ENCODE measurements at regions of chr3 and their contacts with region 1.

Region 1: GRCh38 chr3:49673715-49674496 is at the start of gene APEH:
- DNase-seq: peak; percentile 98 to 99 (median 98)
- H3K4me3 ChIP-seq: peak within 1 kb of the TSS; percentile 48 to 75
- H3K4me3 Mint-ChIP-seq: peak within 1 kb of the TSS; percentile 90 to 99 (median 94)
- H3K27ac ChIP-seq: peak within 1 kb of the TSS; percentile 77
- H3K27ac Mint-ChIP-seq: peak within 1 kb of the TSS; percentile 97 to 99 (median 98)
- H3K4me1 ChIP-seq: peaks cover 32% of the 10 kb centered on the region
- H3K4me1 Mint-ChIP-seq: peaks cover 20 to 50% (median 34%) of the 10 kb centered on the region in 4 donors
- H3K27me3 ChIP-seq: no peaks in the 10 kb centered on the region
- H3K27me3 Mint-ChIP-seq: no peaks in the 10 kb centered on the region
- total RNA-seq, gene APEH: 130 to 136 TPM

Region 2: DNA sequence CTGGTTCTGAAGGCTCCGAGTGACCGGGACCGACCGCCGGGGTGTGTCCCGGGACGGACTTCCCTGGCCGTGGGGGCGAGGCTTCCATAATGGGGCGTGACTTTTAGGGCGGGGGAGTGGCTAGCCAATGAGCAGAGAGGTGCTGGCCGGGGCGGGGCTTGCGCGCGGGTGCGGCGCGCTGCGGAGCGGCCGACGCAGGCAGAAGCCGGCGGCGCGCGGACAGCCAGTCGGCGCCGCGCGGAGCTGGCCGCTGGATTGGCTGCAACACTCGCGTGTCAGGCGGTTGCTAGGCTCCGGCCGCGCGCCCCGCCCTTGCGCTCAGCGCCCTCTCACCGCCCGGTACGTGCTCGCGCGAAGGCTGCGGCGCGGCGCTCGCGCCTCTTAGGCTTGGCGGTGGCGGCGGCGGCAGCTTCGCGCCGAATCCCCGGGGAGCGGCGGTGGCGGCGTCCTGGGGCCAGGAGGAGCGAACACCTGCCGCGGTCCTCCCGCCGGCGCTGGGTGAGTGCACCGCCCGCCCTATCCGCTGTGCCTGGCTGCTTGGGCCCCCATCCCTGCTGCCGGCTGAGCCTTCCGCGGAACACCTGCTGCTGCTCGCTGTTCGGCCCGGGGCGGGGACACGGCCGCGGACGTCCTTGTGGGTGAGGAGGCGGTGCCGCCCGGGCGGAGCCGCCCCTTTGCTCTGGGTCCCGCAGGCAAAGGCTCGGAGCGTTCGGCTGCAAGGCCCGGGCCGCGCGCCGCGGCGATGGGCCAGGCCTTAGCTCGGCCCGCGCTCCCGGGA is 203.8 kb before region 1 on chr3 and contains the start of gene DAG1:
- CTCF ChIA-PET with region 1: no interaction called
- POLR2A ChIA-PET with region 1: interaction called, 5 read pairs
- intact Hi-C with region 1: loop called (anchors 1 kb)
- DNase-seq: peak; percentile 93 to 96 (median 95)
- H3K4me3 ChIP-seq: peak within 1 kb of the TSS; percentile 71 to 89
- H3K4me3 Mint-ChIP-seq: peak within 1 kb of the TSS; percentile 89 to 93 (median 91)
- H3K27ac ChIP-seq: peak within 1 kb of the TSS; percentile 87
- H3K27ac Mint-ChIP-seq: peak within 1 kb of the TSS; percentile 90 to 96 (median 95)
- H3K4me1 ChIP-seq: peaks cover 26% of the 10 kb centered on the region
- H3K4me1 Mint-ChIP-seq: peaks cover 15 to 28% (median 19%) of the 10 kb centered on the region in 4 donors
- H3K27me3 ChIP-seq: no peaks in the 10 kb centered on the region
- H3K27me3 Mint-ChIP-seq: no peaks in the 10 kb centered on the region
- total RNA-seq, gene DAG1: 15.3 to 18.0 TPM

Region 3: GRCh38 chr3:49566312-49566711 is 107.6 kb before region 1 on chr3:
- CTCF ChIA-PET with region 1: interaction called, 12 read pairs
- POLR2A ChIA-PET with region 1: no interaction called
- intact Hi-C with region 1: loop called (anchors 1 kb)
- DNase-seq: no peak
- H3K4me3 ChIP-seq: no peak overlapping the region
- H3K4me3 Mint-ChIP-seq: no peak overlapping the region
- H3K27ac ChIP-seq: no peak overlapping the region
- H3K27ac Mint-ChIP-seq: no peak overlapping the region
- H3K4me1 ChIP-seq: no peaks in the 10 kb centered on the region
- H3K4me1 Mint-ChIP-seq: no peaks in the 10 kb centered on the region
- H3K27me3 ChIP-seq: no peaks in the 10 kb centered on the region
- H3K27me3 Mint-ChIP-seq: peaks cover 0 to 10% of the 10 kb centered on the region in 2 donors

Region 4: GRCh38 chr3:49602877-49603411 is 71.0 kb before region 1 on chr3:
- CTCF ChIA-PET with region 1: interaction called, 3 read pairs
- POLR2A ChIA-PET with region 1: no interaction called
- intact Hi-C with region 1: loop called (anchors 1 kb)
- DNase-seq: peak; percentile 43 to 78 (median 53)
- H3K4me3 ChIP-seq: no peak overlapping the region
- H3K4me3 Mint-ChIP-seq: peak overlapping the region in 5 of 8 donors; percentile 1 to 66 (median 54)
- H3K27ac ChIP-seq: peak overlapping the region; percentile 38
- H3K27ac Mint-ChIP-seq: peak overlapping the region; percentile 73 to 94 (median 90)
- H3K4me1 ChIP-seq: peaks cover 18% of the 10 kb centered on the region
- H3K4me1 Mint-ChIP-seq: peaks cover 14 to 27% (median 19%) of the 10 kb centered on the region in 4 donors
- H3K27me3 ChIP-seq: no peaks in the 10 kb centered on the region
- H3K27me3 Mint-ChIP-seq: no peaks in the 10 kb centered on the region

Region 5: GRCh38 chr3:49689046-49689907 is 15.4 kb after region 1 on chr3 and contains the starts of genes MST1 and RNF123:
- CTCF ChIA-PET with region 1: no interaction called
- POLR2A ChIA-PET with region 1: interaction called, 5 read pairs
- intact Hi-C with region 1: loop called (anchors 1 kb)
- DNase-seq: peak; percentile 90 to 95 (median 92)
- H3K4me3 ChIP-seq: peak within 1 kb of the TSS; percentile 91 to 98
- H3K4me3 Mint-ChIP-seq: peak within 1 kb of the TSS; percentile 90 to 99 (median 96)
- H3K27ac ChIP-seq: peak within 1 kb of the TSS; percentile 72
- H3K27ac Mint-ChIP-seq: peak within 1 kb of the TSS; percentile 93 to 98 (median 97)
- H3K4me1 ChIP-seq: peaks cover 27% of the 10 kb centered on the region
- H3K4me1 Mint-ChIP-seq: peaks cover 16 to 52% (median 35%) of the 10 kb centered on the region in 4 donors
- H3K27me3 ChIP-seq: no peaks in the 10 kb centered on the region
- H3K27me3 Mint-ChIP-seq: peaks cover 2 to 3% of the 10 kb centered on the region in 2 donors
- total RNA-seq, gene MST1: 6.3 to 10.2 TPM
- total RNA-seq, gene RNF123: 69.7 to 74.7 TPM

Region 6: GRCh38 chr3:49723628-49724551 is 50.0 kb after region 1 on chr3 and contains the start of gene GMPPB:
- CTCF ChIA-PET with region 1: no interaction called
- POLR2A ChIA-PET with region 1: interaction called, 3 read pairs
- intact Hi-C with region 1: loop called (anchors 1 kb)
- DNase-seq: peak; percentile 88 to 92 (median 92)
- H3K4me3 ChIP-seq: peak within 1 kb of the TSS; percentile 85 to 89
- H3K4me3 Mint-ChIP-seq: peak within 1 kb of the TSS; percentile 93 to 98 (median 96)
- H3K27ac ChIP-seq: peak within 1 kb of the TSS; percentile 99
- H3K27ac Mint-ChIP-seq: peak within 1 kb of the TSS; percentile 98 to 99 (median 99)
- H3K4me1 ChIP-seq: peaks cover 26% of the 10 kb centered on the region
- H3K4me1 Mint-ChIP-seq: peaks cover 13 to 48% (median 24%) of the 10 kb centered on the region in 4 donors
- H3K27me3 ChIP-seq: no peaks in the 10 kb centered on the region
- H3K27me3 Mint-ChIP-seq: peaks cover 0 to 2% of the 10 kb centered on the region in 2 donors
- total RNA-seq, gene GMPPB: 59.5 to 61.3 TPM

Region 7: GRCh38 chr3:49939858-49940666 is 266.2 kb after region 1 on chr3 and contains the start of gene RBM6:
- CTCF ChIA-PET with region 1: no interaction called
- POLR2A ChIA-PET with region 1: interaction called, 3 read pairs
- intact Hi-C with region 1: loop called (anchors 5 kb)
- DNase-seq: peak; percentile 92 to 97 (median 94)
- H3K4me3 ChIP-seq: peak within 1 kb of the TSS; percentile 75 to 96
- H3K4me3 Mint-ChIP-seq: peak within 1 kb of the TSS; percentile 94 to 99 (median 98)
- H3K27ac ChIP-seq: peak within 1 kb of the TSS; percentile 96
- H3K27ac Mint-ChIP-seq: peak within 1 kb of the TSS; percentile 97 to 99 (median 98)
- H3K4me1 ChIP-seq: peaks cover 19% of the 10 kb centered on the region
- H3K4me1 Mint-ChIP-seq: peaks cover 17 to 40% (median 26%) of the 10 kb centered on the region in 4 donors
- H3K27me3 ChIP-seq: no peaks in the 10 kb centered on the region
- H3K27me3 Mint-ChIP-seq: no peaks in the 10 kb centered on the region
- total RNA-seq, gene RBM6: 191 to 194 TPM